ENCODE measurements at regions of chr12 and their contacts with region 1.

Region 1: DNA sequence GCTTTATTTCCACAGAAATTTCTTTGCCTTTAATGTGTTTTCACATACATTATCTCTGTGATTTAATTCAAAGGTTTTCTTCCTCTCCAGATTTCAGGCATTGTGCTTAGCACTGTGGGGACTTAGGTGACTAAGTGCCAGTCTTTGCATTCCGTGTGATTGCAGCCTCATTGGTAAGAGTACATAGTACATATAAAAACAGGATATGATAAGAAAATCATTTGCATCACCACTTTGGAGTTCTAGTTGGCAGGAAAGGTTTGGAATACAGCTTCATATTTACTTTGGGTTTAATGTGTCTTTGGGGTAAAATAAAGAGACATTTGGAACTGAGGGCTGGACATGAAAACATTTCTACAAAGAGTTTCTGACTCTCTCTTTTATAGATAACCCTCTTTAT is 37.8 kb upstream of the C12orf75 start:
- DNase-seq: no peak

Region 2: DNA sequence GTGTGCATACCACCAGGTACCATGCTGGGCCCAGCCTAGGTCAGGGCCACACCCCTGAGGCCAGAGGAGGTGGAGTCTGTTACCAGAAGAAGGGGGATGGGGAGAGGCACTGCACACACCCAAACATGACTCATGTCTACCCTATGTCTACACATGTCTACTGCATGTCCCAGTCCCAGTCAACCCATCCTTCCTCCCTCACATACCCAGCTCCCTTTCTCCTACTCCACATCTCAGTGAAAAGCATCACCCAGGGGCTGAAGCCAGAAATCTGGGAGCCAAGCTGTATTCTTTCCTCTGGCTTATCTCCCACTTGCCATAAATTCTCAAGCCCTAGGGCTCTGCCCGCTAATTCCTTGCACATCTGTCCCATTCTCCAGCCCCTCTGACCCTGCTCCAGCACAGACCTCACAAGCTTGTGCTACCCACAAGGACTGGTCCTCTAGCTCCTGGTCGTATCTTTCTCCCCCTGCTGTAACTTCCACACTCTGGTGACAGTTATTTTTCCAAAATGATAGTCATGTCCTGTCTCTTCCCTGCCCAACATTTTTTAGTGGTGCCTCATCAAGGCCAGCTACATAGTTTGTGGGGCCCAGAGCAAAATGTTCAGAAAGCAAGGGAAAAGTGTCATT is 38.7 kb before region 1 on chr12:
- intact Hi-C with region 1: no loop called
- DNase-seq: no peak

Region 3: DNA sequence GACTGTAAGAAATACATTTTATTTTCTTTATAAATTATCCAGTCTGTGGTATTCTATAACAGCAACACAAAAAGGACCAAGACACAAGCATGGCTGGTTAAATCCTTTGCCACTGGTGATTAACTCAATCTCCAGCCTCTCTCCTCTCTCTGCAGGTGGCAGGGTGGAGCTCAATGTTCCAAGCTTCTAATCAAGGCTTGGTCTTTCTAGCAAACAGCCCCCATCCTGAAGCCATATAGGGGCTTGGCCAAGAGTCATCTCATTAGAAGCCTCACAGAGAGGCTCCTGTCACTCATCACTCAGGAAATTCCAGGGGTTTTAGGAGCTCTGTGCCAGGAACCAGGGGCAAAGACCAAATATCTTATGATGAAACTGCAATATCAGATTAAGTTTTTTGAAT is 49.8 kb after region 1 on chr12:
- intact Hi-C with region 1: loop called in 1 of 2 experiments (anchors 2 kb)
- DNase-seq: no peak

Region 4: GRCh38 chr12:106601031-106601430 is 1308.3 kb after region 1 on chr12:
- intact Hi-C with region 1: no loop called
- DNase-seq: no peak

Measured in posterior vena cava (tissue), 2 donors.